Ovary (tissue), 10 donors: ENCODE measurements at regions of chr2 and their contacts with region 1.

Region 1: DNA sequence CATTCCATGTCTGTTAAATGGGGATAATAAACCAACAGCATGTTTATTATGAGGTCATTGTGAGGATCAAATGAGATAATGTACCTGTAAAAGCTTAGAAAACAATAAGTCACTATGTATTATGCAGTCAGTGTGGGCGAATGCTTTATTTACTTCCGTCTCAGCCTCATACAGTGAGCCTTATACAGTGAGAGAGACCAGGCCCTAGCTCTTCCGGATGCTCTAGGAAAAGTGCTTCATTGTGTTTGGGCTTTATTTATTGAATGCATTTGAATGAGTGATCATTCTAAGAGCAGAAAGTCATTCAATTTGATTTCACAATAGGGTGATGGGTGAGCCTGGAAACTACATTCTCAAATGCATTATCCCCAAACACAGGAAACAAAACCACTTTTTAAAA is 603.9 kb upstream of the FANCL start:
- DNase-seq: no peak
- H3K4me3 ChIP-seq: no peak overlapping the region
- H3K27ac ChIP-seq: no peak overlapping the region
- H3K4me1 ChIP-seq: no peaks in the 10 kb centered on the region
- H3K27me3 ChIP-seq: no peaks in the 10 kb centered on the region
- CTCF ChIP-seq: no peak
- EP300 ChIP-seq: no peak
- POLR2A ChIP-seq: no peak

Region 2: GRCh38 chr2:59674100-59674499 is 829.1 kb after region 1 on chr2:
- intact Hi-C with region 1: loop called in 1 of 4 experiments (anchors 5 kb)
- DNase-seq: no peak
- H3K4me3 ChIP-seq: no peak overlapping the region
- H3K27ac ChIP-seq: no peak overlapping the region
- H3K4me1 ChIP-seq: no peaks in the 10 kb centered on the region
- H3K27me3 ChIP-seq: no peaks in the 10 kb centered on the region
- CTCF ChIP-seq: no peak
- EP300 ChIP-seq: no peak
- POLR2A ChIP-seq: no peak

Region 3: DNA sequence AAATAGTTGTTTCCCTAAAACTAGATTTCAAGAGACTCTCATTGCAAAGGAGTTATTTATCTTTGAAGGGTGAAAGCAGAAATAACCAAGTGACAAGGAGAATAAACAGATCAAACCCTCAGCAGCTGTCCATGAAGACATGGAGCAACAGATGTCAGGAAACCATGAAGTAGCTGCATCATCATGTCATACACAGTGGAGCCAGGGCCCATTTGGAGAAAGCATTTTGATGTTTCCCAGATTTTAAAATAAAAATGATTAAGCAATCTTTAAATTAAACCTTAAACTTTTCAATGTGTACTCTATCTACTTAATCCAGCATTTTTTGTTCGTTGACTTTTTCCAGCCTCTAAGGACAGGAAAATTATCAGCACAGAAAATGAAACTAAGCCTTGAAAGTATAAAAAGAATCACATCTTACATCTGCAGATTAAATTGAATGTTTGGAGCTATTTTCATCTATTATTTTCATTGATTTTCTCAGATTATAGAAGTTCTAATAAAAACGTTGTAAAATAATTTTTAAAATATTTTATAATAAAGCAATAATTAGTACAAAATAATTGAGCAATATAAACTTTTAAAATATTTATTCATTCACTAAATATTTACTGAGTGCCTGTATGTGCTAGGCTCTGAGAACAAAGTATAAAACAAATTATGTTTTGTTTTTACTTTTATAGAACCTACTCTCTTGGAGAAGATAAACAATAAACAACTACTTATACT is 848.4 kb after region 1 on chr2:
- intact Hi-C with region 1: no loop called
- DNase-seq: no peak
- H3K4me3 ChIP-seq: no peak overlapping the region
- H3K27ac ChIP-seq: no peak overlapping the region
- H3K4me1 ChIP-seq: no peaks in the 10 kb centered on the region
- H3K27me3 ChIP-seq: no peaks in the 10 kb centered on the region
- CTCF ChIP-seq: no peak
- EP300 ChIP-seq: no peak
- POLR2A ChIP-seq: no peak